Astrocyte of the cerebellum (primary cell): ENCODE measurements at regions of chr13 and their contacts with region 1.

Region 1: GRCh38 chr13:37049810-37050209 is 9.7 kb downstream of the SUPT20H start:
- DNase-seq: no peak
- H3K4me3 ChIP-seq: no peak overlapping the region
- CTCF ChIP-seq: no peak

Region 2: DNA sequence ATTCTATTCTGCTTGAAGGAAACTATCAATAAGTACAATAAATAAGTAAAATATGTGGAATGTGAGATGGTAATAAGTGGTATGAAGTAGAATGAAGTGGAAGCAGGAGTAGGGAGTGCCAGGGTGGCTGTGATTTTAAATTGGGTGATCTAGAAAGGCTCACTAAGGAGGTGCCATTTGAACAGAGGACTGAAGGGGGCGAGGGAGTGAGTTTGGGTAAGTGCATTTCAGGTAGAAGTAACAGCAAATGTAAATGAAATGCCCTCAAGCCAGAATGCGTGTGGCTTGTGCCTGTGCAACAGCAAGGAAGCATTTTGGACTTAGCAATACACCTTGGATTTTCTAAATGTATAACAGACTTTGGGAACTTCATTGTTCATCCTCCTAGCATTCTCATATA is 540.4 kb before region 1 on chr13:
- in situ Hi-C with region 1: no loop called
- DNase-seq: no peak
- H3K4me3 ChIP-seq: no peak overlapping the region
- CTCF ChIP-seq: peak; percentile 19

Region 3: DNA sequence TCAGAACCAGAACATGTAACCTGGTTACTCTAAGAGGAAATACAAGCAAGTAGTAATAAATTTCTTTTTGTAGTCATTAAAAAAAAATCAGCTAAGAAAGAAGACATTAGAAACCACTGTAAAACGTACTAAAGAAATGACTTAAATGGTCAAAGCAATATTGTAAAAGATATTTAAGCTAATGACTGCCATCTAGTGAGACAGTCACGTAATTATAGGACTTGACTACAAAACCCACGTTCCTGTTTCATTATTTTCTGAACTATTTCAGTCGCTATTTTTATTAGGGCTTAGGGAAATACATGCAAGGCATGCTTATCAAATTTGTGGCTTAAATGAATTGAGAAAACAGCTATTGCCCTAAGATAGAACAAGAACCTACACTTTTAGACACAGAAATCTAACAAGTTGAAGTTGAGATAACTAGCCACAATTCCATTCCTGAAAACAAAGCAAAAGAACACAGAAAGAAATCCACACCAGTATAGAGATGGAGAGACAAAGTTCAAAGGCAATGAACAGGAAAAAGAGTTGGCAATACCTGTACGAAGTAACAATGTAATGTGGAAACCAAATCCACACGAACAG is 68.6 kb before region 1 on chr13:
- in situ Hi-C with region 1: no loop called
- DNase-seq: peak; percentile 44
- H3K4me3 ChIP-seq: no peak overlapping the region
- CTCF ChIP-seq: no peak

Region 4: GRCh38 chr13:37011002-37011401 is 38.8 kb before region 1 on chr13:
- in situ Hi-C with region 1: loop called (anchors 5 kb)
- DNase-seq: no peak
- H3K4me3 ChIP-seq: no peak overlapping the region
- CTCF ChIP-seq: no peak

Region 5: GRCh38 chr13:37097076-37097475 is 47.3 kb after region 1 on chr13:
- in situ Hi-C with region 1: no loop called
- DNase-seq: no peak
- H3K4me3 ChIP-seq: no peak overlapping the region
- CTCF ChIP-seq: no peak